Ascending aorta (tissue), 2 donors: ENCODE measurements at regions of chr4 and their contacts with region 1.

Region 1: GRCh38 chr4:80072744-80073472 is at the start of gene ANTXR2:
- DNase-seq: peak; percentile 71 to 96
- H3K4me3 ChIP-seq: peak within 1 kb of the TSS; percentile 79 to 89
- H3K27ac ChIP-seq: peak within 1 kb of the TSS; percentile 83 to 91
- H3K4me1 ChIP-seq: peaks cover 0 to 14% of the 10 kb centered on the region in 2 donors
- H3K27me3 ChIP-seq: no peaks in the 10 kb centered on the region
- CTCF ChIP-seq: peak in 1 of 3 experiments; percentile 17
- total RNA-seq, gene ANTXR2: 16.8 TPM

Region 2: DNA sequence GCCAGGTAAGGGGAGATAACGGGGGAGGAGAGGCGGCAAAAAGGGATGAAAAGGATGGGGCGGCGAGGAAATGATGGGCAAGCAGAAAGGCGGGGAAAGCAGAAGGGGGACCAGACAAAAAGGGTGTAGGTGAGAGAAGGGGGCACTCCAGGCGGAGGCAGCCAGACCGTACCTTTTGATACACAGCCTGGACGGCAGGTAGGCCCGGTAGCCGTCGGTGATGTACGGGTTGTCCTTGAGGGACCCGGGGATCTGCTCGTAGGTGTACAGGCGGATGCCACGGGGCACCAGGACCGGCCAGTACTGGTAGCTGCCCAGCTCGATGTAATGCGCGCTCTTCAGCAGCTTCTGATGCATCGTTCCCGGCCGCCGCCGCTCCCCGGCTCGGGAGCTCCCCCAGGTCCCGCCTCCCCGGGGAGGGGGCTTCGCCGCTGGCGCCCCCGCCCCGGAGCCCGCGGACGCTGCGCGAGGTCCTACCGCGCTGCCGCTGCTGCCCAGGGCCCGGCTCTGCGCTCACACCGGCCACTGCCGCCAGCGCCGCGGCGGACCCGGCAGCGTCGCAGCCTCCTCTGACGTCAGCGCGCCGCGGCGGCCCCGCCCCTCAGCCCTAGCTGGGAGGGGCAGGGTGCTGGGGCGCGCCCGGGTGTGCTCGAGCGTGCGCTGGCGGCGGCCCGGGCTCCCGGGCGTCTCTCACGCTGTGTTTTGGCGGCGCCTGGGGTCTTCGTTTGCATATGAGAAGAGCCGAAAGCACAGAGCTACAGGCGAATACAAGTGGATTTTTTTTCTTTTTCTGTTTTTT is 1133.8 kb before region 1 on chr4 and contains the start of gene PAQR3:
- intact Hi-C with region 1: loop called (anchors 5 kb)
- DNase-seq: peak; percentile 18 to 90
- H3K4me3 ChIP-seq: peak within 1 kb of the TSS; percentile 82 to 91
- H3K27ac ChIP-seq: peak within 1 kb of the TSS; percentile 47 to 55
- H3K4me1 ChIP-seq: peaks cover 0 to 10% of the 10 kb centered on the region in 2 donors
- H3K27me3 ChIP-seq: no peaks in the 10 kb centered on the region
- CTCF ChIP-seq: no peak
- total RNA-seq, gene PAQR3: 6.7 TPM

Region 3: GRCh38 chr4:79547851-79548250 is 525.1 kb before region 1 on chr4:
- intact Hi-C with region 1: no loop called
- DNase-seq: no peak
- H3K4me3 ChIP-seq: no peak overlapping the region
- H3K27ac ChIP-seq: no peak overlapping the region
- H3K4me1 ChIP-seq: no peaks in the 10 kb centered on the region
- H3K27me3 ChIP-seq: no peaks in the 10 kb centered on the region
- CTCF ChIP-seq: no peak

Region 4: GRCh38 chr4:79650794-79651431 is 422.0 kb before region 1 on chr4:
- intact Hi-C with region 1: loop called (anchors 10 kb)
- DNase-seq: no peak
- H3K4me3 ChIP-seq: no peak overlapping the region
- H3K27ac ChIP-seq: peak overlapping the region in 1 of 2 donors; percentile 66
- H3K4me1 ChIP-seq: peaks cover 0 to 22% of the 10 kb centered on the region in 2 donors
- H3K27me3 ChIP-seq: no peaks in the 10 kb centered on the region
- CTCF ChIP-seq: no peak

Region 5: DNA sequence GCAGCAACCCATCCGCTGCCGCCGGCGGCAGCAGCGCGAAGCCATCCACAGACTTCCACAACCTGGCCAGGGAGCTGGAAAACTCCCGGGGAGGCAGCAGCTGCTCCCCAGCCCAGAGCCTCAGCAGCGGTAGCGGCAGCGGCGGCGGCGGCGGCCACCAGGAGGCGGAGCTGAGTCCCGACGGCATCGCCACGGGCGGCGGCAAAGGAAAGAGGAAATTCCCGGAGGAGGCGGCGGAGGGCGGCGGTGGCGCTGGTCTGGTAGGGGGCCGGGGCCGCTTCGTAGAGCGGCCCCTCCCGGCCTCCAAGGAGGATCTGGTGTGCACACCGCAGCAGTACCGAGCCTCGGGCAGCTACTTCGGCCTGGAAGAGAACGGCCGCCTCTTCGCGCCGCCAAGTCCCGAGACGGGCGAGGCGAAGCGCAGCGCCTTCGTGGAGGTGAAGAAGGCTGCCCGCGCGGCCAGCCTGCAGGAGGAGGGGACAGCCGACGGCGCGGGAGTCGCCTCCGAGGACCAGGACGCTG is 129.3 kb after region 1 on chr4:
- intact Hi-C with region 1: loop called (anchors 5 kb)
- DNase-seq: peak in 1 of 2 donors; percentile 89
- H3K4me3 ChIP-seq: peak overlapping the region; percentile 75 to 76
- H3K27ac ChIP-seq: peak overlapping the region; percentile 6 to 57
- H3K4me1 ChIP-seq: peaks cover under 1 to 7% of the 10 kb centered on the region in 2 donors
- H3K27me3 ChIP-seq: peaks cover 31% of the 10 kb centered on the region
- CTCF ChIP-seq: peak; percentile 71 to 91 (median 91)